Testis (tissue), 5 donors: ENCODE measurements at regions of chr6 and their contacts with region 1.

Region 1: DNA sequence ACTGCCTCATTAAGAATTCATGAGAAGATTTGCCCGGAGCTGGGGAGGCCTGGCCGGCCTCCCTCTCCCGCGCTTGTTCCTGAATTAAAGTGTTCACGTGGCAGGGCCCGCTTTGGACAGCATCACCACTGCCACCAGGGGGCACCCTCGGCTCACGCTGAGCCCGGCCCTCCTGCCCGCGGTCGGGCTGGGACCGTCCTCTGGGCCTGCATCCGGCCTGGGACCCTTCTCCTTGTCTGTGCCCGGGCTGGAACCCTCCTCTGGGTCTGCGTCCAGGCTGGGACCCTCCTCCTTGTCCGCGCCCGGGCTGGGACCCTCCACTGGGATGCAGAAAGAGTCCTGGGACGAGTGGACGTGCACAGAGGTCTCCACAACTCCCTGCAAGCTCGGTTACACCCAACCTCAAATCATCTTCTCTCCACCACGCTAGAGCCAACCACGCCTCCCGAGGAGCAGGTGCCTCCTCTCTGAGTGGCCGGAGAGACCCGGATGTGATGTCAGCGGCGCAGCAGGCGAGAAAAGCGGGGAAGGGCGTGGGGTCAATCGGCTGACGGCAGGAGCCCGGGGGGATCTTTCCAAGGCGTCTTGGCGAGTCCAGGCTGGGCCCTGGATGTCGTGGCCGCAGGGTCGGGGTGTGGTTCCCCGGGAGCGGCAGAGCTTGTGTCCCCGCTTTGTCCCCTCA is 50.9 kb upstream of the DACT2 start:
- DNase-seq: peak; percentile 89
- H3K4me3 ChIP-seq: peak overlapping the region in 1 of 2 donors; percentile 30
- H3K27ac ChIP-seq: no peak overlapping the region
- H3K4me1 ChIP-seq: no peaks in the 10 kb centered on the region
- H3K27me3 ChIP-seq: no peaks in the 10 kb centered on the region
- CTCF ChIP-seq: peak; percentile 94 to 97 (median 94)
- POLR2A ChIP-seq: no peak

Region 2: GRCh38 chr6:168884646-168885086 is 514.2 kb after region 1 on chr6:
- intact Hi-C with region 1: loop called (anchors 5 kb)
- DNase-seq: peak; percentile 86
- H3K4me3 ChIP-seq: peak overlapping the region; percentile 3 to 21
- H3K27ac ChIP-seq: no peak overlapping the region
- H3K4me1 ChIP-seq: peaks cover 3% of the 10 kb centered on the region
- H3K27me3 ChIP-seq: no peaks in the 10 kb centered on the region
- CTCF ChIP-seq: peak; percentile 88 to 96 (median 91)
- POLR2A ChIP-seq: no peak